MCF 10A (cell line): ENCODE measurements at regions of chr1 and their contacts with region 1.

Region 1: GRCh38 chr1:245858722-245859492 is 648.2 kb downstream of the SMYD3 start:
- DNase-seq: peak; percentile 30
- H3K4me3 Mint-ChIP-seq: no peak overlapping the region
- H3K27ac Mint-ChIP-seq: no peak overlapping the region
- H3K4me1 Mint-ChIP-seq: peaks cover 20% of the 10 kb centered on the region
- H3K27me3 Mint-ChIP-seq: no peaks in the 10 kb centered on the region
- CTCF ChIP-seq: no peak

Region 2: GRCh38 chr1:245870698-245871097 is 11.8 kb after region 1 on chr1:
- CTCF ChIA-PET with region 1: interaction called, 17 read pairs
- POLR2A ChIA-PET with region 1: no interaction called
- intact Hi-C with region 1: no loop called
- DNase-seq: no peak
- H3K4me3 Mint-ChIP-seq: no peak overlapping the region
- H3K27ac Mint-ChIP-seq: no peak overlapping the region
- H3K4me1 Mint-ChIP-seq: peaks cover 5% of the 10 kb centered on the region
- H3K27me3 Mint-ChIP-seq: no peaks in the 10 kb centered on the region
- CTCF ChIP-seq: no peak

Region 3: GRCh38 chr1:245880754-245881403 is 22.0 kb after region 1 on chr1:
- CTCF ChIA-PET with region 1: no interaction called
- POLR2A ChIA-PET with region 1: no interaction called
- intact Hi-C with region 1: no loop called
- DNase-seq: no peak
- H3K4me3 Mint-ChIP-seq: no peak overlapping the region
- H3K27ac Mint-ChIP-seq: no peak overlapping the region
- H3K4me1 Mint-ChIP-seq: peaks cover 5% of the 10 kb centered on the region
- H3K27me3 Mint-ChIP-seq: no peaks in the 10 kb centered on the region
- CTCF ChIP-seq: no peak

Region 4: GRCh38 chr1:245969283-245969682 is 110.4 kb after region 1 on chr1:
- CTCF ChIA-PET with region 1: no interaction called
- POLR2A ChIA-PET with region 1: no interaction called
- intact Hi-C with region 1: no loop called
- DNase-seq: no peak
- H3K4me3 Mint-ChIP-seq: no peak overlapping the region
- H3K27ac Mint-ChIP-seq: no peak overlapping the region
- H3K4me1 Mint-ChIP-seq: no peaks in the 10 kb centered on the region
- H3K27me3 Mint-ChIP-seq: no peaks in the 10 kb centered on the region
- CTCF ChIP-seq: no peak